RWPE1 (cell line): ENCODE measurements at regions of chr9 and their contacts with region 1.

Region 1: GRCh38 chr9:107644733-107645463 is 155.3 kb upstream of the KLF4 start:
- DNase-seq: no peak
- H3K27ac ChIP-seq: no peak overlapping the region
- CTCF ChIP-seq: no peak

Region 2: DNA sequence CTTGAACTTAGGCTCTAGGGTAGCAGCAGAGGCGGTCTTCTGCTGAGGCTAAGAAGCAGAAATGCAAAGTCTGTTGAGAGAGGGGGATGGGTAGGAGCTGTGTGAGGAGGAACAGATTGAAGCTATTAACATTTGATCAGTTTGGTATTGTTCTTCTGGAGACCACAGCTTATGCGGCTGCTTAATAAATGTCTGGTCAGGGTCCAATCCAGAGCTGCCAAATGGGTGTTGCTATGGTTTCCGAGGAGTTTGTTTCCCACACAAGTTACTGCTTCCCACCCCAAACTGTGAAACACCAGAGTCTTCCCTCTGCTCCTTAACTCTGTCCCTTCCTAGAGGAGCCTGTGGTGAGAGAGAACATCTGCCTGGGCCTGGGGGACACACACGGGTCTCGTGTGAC is 13.1 kb before region 1 on chr9:
- CTCF ChIA-PET with region 1: interaction called, 3 read pairs
- POLR2A ChIA-PET with region 1: interaction called, 10 read pairs
- DNase-seq: no peak
- H3K27ac ChIP-seq: no peak overlapping the region
- CTCF ChIP-seq: no peak

Region 3: GRCh38 chr9:107768224-107768623 is 123.3 kb after region 1 on chr9:
- CTCF ChIA-PET with region 1: no interaction called
- POLR2A ChIA-PET with region 1: no interaction called
- DNase-seq: no peak
- H3K27ac ChIP-seq: no peak overlapping the region
- CTCF ChIP-seq: no peak